PC-9 (cell line): ENCODE measurements at regions of chr17 and their contacts with region 1.

Region 1: DNA sequence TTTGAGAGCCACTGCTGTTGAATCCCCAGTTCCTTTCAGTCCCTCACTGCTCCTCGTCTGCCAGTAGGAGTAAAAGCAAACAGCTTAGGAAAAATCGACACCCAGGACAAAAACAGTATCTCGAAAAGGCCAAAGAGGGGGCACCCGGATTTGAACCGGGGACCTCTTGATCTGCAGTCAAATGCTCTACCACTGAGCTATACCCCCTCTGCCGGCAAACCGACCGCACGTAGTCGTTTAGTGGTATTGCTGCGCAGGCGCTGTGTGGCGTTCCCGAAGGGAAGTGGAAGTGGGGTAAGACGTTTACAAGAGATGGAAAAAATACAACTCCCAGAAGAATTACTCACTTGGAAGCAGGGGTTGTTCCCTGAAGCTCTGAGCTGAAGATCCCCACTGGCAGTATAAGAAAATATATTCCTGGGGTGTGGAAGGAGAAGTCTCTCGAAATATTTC is 2.2 kb upstream of the PLXDC1 start:
- DNase-seq: peak; percentile 79 to 85
- H3K4me3 ChIP-seq: peak overlapping the region; percentile 73
- H3K27ac ChIP-seq: no peak overlapping the region
- H3K4me1 ChIP-seq: peaks cover 8% of the 10 kb centered on the region
- H3K27me3 ChIP-seq: no peaks in the 10 kb centered on the region
- CTCF ChIP-seq: no peak

Region 2: DNA sequence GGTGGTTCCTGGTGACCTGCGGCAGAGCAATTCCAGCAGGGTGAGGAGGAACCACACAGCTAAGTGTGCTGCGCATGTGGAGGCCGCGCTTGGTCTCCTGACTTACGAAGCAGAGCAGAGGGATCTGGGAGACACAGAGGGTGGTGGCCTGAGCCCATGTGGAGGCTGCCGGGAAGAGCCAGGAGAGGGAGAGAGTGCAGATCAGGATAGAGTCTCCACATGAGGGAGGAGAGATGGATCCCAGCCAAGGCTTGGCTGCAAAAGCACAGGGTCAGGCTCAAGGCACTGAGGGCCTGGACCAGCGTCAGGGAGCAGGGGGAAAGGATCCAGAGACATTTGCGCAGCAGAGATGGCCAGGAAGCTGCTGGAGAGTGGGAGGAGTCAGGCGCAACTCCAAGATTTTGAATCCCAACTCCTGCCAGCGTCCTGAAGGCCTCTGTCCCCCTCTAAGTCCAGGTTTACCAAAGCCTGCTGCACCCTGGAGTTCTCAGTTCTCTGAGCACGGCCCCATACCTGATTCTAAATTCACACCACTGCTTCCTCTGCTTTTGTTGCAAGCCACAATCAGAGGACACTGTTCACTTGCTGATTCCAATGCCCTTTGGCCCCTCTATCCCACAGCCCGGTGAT is 459.8 kb before region 1 on chr17:
- CTCF ChIA-PET with region 1: no interaction called
- POLR2A ChIA-PET with region 1: interaction called, 20 read pairs
- intact Hi-C with region 1: no loop called
- DNase-seq: no peak
- H3K4me3 ChIP-seq: no peak overlapping the region
- H3K27ac ChIP-seq: no peak overlapping the region
- H3K4me1 ChIP-seq: no peaks in the 10 kb centered on the region
- H3K27me3 ChIP-seq: no peaks in the 10 kb centered on the region
- CTCF ChIP-seq: no peak

Region 3: DNA sequence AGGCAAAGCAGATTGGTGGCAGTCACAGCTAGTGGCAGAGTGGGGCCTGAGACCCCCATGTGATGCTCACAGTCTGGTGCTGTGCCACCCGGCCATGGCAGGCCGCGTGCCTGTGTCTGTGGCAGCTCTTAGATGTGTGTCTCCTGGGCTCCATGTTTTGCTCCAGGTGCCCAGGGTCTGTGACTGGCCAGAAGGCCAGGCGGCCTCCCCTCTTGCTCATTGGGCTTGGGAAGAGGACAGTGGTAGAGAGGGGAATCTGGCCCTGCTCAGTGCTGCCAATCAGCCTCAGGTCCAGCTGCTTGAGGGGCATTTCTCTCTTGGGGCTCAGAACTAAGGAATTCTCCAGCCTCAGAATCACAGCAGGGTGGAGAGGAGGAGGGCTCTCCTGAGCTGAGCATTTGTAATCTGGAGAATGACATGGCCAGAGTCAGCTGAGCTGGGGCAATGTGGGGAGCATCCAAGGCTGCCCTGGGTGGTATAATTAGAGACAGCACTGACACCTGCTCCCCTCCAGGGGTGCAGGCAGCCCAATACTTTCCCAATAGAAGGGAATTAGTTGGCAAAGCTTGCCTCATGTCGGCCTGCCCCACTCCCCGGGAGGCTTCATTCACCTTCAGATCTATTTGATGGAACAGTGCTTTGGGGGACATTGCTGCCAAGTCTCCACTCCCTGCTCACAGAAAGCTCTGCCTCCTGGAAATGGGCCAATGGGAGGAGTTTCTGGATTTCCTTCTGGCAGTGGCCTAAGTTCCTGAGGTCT is 230.9 kb before region 1 on chr17:
- CTCF ChIA-PET with region 1: no interaction called
- POLR2A ChIA-PET with region 1: no interaction called
- intact Hi-C with region 1: loop called (anchors 5 kb)
- DNase-seq: peak in 1 of 2 experiments; percentile 38
- H3K4me3 ChIP-seq: no peak overlapping the region
- H3K27ac ChIP-seq: peak overlapping the region; percentile 18; the same call in 1 of the 2 replicates
- H3K4me1 ChIP-seq: no peaks in the 10 kb centered on the region
- H3K27me3 ChIP-seq: no peaks in the 10 kb centered on the region
- CTCF ChIP-seq: no peak

Region 4: DNA sequence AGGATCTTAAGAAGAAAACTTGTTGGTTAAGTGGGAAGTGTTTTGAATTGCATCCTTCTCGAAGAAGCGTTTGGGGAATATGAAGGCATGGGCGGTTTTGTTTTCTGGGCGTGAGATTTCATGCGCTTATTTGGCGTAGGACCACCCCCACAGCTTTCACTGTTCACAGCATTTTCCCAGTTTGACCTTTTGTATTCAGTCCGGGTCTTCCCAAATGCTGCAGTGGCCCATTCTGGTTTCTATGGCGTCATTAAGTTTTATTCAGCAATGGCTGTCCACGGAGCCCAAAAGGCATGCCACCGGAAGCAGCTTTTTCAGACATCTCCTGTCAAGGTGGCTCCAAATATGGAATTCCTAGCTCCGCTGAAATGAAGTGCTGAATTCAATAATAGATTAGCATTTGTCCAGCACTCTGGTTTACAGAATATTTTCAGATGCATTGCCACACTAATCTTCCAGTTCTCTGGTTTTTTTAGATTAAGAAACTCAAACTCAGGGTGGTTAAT is 95.9 kb before region 1 on chr17:
- CTCF ChIA-PET with region 1: interaction called, 4 read pairs
- POLR2A ChIA-PET with region 1: no interaction called
- intact Hi-C with region 1: loop called (anchors 5 kb)
- DNase-seq: no peak
- H3K4me3 ChIP-seq: peak overlapping the region; percentile 73
- H3K27ac ChIP-seq: no peak overlapping the region
- H3K4me1 ChIP-seq: peaks cover 12% of the 10 kb centered on the region
- H3K27me3 ChIP-seq: no peaks in the 10 kb centered on the region
- CTCF ChIP-seq: no peak

Region 5: GRCh38 chr17:39244600-39245570 is 91.3 kb after region 1 on chr17:
- CTCF ChIA-PET with region 1: interaction called, 5 read pairs
- POLR2A ChIA-PET with region 1: interaction called, 10 read pairs
- intact Hi-C with region 1: loop called (anchors 5 kb)
- DNase-seq: peak; percentile 73 to 85
- H3K4me3 ChIP-seq: no peak overlapping the region
- H3K27ac ChIP-seq: no peak overlapping the region
- H3K4me1 ChIP-seq: peaks cover 11% of the 10 kb centered on the region
- H3K27me3 ChIP-seq: no peaks in the 10 kb centered on the region
- CTCF ChIP-seq: peak; percentile 97